GM13976 (cell line): ENCODE measurements at regions of chr18 and their contacts with region 1.

Region 1: GRCh38 chr18:8988261-8988871 is 114.1 kb upstream of the NDUFV2 start:
- DNase-seq: peak; percentile 75
- CTCF ChIP-seq: peak; percentile 86

Region 2: GRCh38 chr18:8654503-8655451 is 333.6 kb before region 1 on chr18:
- in situ Hi-C with region 1: loop called (anchors 5 kb)
- DNase-seq: peak; percentile 54
- CTCF ChIP-seq: peak; percentile 61

Region 3: GRCh38 chr18:8694891-8695290 is 293.5 kb before region 1 on chr18:
- in situ Hi-C with region 1: loop called (anchors 5 kb)
- DNase-seq: no peak
- CTCF ChIP-seq: no peak

Region 4: DNA sequence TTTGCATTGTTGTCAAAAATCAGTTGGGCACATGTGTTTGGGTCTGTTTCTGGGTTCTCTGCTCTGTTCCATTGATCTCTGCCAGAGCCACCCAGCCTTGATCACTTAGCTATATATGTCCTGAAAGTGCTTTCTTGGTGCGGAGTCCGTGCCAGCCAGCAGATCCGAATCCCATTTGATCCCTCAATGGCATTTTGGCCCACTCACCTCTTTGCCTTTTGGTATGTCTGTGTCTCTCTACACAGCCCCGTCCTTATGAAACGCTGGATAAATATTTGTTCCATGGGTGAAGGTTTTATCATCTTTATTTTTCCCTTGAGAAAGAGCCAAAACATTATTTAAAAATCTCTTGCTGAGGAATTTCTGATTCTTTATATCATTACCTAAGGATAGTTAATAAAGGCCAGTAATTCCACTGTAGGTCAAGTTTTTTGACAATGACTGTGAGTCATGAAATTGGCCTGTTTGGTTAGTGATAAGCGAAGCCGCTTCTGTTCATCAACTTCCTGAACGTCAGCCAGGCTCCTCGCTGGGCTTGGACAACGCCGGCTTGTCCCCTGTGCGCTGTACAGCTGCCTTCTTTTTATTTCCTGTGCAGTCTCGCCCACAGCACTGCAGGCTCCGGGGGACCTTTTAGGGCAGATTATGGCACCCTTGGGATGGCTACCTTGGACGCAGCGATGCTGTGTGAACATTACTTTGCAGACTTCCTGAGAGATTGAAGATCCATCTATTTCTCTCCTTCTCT is 258.1 kb before region 1 on chr18:
- in situ Hi-C with region 1: no loop called
- DNase-seq: no peak
- CTCF ChIP-seq: no peak